ENCODE measurements at regions of chr17 and their contacts with region 1.

Region 1: GRCh38 chr17:3723556-3724369 is at the start of gene HASPIN:
- DNase-seq: peak; percentile 74 to 97 (median 86)

Region 2: DNA sequence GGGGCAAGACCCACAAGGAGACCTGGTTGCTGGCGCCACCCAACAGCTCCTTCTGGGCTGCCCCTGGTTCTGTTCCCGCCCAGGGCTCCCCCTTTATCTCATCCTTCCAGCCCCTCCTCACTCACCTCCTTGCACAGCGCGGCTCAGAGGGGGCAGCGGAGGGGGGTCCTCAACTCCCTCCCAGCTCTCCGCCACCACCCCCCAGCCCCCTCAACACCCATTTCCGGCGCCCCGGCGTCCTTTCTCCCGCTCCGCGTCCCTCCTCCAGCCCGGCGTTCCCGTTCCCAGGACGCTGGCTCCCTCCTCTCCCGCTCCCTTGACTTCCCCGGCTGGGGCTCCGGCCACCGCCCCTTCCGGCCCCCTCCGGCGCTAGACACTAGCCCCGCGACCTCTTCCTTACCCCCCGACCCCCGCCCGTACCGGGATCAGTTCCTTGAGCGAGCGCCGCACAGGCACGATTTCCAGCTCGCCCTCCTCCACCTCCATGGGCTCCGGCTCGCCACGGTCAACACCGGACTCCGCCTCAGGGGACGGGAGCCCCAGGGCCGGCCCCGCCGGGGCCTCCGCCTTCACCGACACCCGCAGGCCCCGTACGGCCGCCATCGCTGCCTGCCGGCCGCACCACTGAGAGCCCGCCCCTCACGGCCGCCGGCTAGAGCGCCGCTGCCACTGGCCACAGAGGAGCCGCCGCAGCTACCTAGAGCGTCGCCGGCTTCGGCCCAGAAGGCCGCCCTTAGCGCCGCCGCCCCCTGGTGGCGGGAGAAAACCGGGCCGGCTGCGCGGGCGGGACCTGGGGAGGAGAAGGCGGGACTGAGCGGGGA is 122.1 kb after region 1 on chr17 and contains the start of gene NCBP3:
- intact Hi-C with region 1: loop called (anchors 5 kb)
- DNase-seq: peak; percentile 76 to 99 (median 88)

Measured in posterior cingulate gyrus (tissue), 11 donors.